ENCODE measurements at regions of chr7 and their contacts with region 1.

Region 1: GRCh38 chr7:134789967-134790685 is 10.7 kb downstream of the CALD1 start:
- DNase-seq: no peak
- H3K4me3 ChIP-seq: no peak overlapping the region
- H3K27ac ChIP-seq: peak overlapping the region; percentile 66 to 91 (median 85)
- H3K4me1 ChIP-seq: peaks cover 0 to 33% (median 3%) of the 10 kb centered on the region in 4 donors
- H3K27me3 ChIP-seq: no peaks in the 10 kb centered on the region
- CTCF ChIP-seq: no peak
- EP300 ChIP-seq: peak; percentile 92
- POLR2A ChIP-seq: no peak

Region 2: DNA sequence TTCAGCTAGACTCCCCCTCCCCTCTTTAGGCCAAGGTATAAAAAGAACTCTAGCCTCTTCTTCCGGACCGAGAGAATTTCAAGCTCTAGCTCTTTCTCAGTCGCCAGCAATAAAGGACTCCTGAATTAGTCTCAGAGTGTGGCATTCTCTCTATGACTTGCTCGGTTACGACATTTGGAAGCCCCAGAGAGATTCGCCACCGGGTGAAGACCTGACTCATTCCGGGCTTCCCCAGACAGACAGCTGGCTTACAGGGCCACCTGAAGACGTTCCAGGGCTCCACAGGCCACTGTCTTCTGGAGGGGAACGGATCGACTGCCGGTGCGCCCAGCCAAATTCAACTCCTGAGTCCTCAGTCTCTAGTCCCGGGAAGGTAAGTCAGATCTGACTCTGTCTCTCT is 241.2 kb before region 1 on chr7 and contains the start of gene AKR1B15:
- in situ Hi-C with region 1: no loop called
- intact Hi-C with region 1: no loop called
- DNase-seq: no peak
- H3K4me3 ChIP-seq: no peak within 1 kb of the TSS
- H3K27ac ChIP-seq: no peak within 1 kb of the TSS
- H3K4me1 ChIP-seq: peaks cover 0 to 10% (median 3%) of the 10 kb centered on the region in 4 donors
- H3K27me3 ChIP-seq: no peaks in the 10 kb centered on the region
- CTCF ChIP-seq: no peak
- EP300 ChIP-seq: no peak
- POLR2A ChIP-seq: no peak
- total RNA-seq, gene AKR1B15: 0.48 TPM in 1 of 4 donors, not detected in the others

Region 3: DNA sequence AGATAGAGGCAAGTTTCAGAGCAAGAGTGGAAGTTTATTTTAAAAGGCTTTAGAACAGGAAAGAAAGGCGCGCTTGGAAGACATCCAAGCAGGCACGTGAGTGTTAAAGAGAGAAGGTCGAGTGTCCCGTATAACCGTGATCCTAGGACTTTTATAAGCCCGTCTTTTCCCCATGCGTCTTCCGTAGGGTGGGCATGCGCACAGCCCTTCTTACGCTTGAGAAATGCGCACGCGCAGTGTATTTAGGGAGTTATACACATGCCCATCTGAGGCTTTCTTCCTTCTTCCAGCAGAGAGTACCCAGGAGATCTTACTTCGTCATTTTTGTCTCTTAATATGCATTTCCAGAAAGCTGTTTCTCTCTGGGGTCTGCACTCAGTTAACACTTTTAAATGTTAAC is 41.7 kb after region 1 on chr7:
- in situ Hi-C with region 1: no loop called
- intact Hi-C with region 1: loop called (anchors 5 kb)
- DNase-seq: peak; percentile 37
- H3K4me3 ChIP-seq: no peak overlapping the region
- H3K27ac ChIP-seq: peak overlapping the region; percentile 73 to 85 (median 82)
- H3K4me1 ChIP-seq: peaks cover 10 to 54% (median 16%) of the 10 kb centered on the region in 4 donors
- H3K27me3 ChIP-seq: no peaks in the 10 kb centered on the region
- CTCF ChIP-seq: no peak
- EP300 ChIP-seq: no peak
- POLR2A ChIP-seq: no peak